Natural killer cell (primary cell): ENCODE measurements at regions of chr19 and their contacts with region 1.

Region 1: DNA sequence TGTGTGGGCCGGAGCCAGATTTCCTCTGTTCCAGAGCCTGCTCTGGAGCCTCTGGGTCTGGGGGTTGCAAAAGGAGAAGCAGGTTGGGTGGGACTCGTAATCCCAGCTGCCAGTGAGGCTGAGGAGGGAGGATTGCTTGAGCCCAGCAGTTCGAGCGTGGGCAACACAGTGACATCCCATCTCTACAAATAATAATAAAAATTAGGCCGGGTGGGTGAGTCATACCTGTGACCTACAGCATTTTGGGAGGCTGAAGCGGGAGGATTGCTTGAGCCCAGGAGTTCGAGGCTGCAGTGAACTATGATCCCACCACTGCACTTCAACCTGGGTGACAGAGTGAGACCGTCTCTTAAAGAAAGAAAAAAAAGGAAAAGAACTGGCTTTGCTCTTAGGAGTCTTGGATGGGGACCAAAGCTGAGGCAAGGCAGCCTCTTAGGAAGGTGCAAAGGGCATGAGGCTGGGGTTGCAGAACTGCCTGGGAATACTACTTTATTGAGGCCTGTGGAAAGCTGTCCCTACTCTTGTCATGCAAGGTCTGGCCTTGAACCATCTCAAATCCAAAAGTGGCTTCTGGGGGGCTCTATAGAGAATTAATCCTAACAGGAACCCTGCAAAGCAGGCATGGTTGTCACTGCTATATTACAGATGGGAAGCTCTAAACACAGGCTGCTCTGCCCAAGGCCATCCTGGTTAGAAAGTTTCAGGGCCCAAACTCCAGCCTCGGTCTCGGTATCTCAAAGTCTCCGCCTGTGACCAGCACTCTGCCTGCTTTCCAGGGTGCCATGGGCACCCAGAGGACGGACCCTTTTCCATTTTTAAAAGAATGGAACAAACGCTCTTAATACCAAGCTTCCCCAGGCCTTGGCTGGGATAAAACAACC is 880 bp upstream of the C19orf12 start:
- DNase-seq: no peak
- ATAC-seq: peak; percentile 2 to 17 (median 10)
- H3K4me3 ChIP-seq: peak overlapping the region; percentile 50
- H3K4me3 Mint-ChIP-seq: peak overlapping the region; percentile 95
- H3K27ac ChIP-seq: peak overlapping the region; percentile 81
- H3K27ac Mint-ChIP-seq: peak overlapping the region; percentile 75 to 88
- H3K4me1 ChIP-seq: peaks cover 53% of the 10 kb centered on the region
- H3K4me1 Mint-ChIP-seq: peaks cover 49 to 51% of the 10 kb centered on the region in 2 donors
- H3K27me3 ChIP-seq: no peaks in the 10 kb centered on the region
- H3K27me3 Mint-ChIP-seq: no peaks in the 10 kb centered on the region
- CTCF ChIP-seq: no peak

Region 2: DNA sequence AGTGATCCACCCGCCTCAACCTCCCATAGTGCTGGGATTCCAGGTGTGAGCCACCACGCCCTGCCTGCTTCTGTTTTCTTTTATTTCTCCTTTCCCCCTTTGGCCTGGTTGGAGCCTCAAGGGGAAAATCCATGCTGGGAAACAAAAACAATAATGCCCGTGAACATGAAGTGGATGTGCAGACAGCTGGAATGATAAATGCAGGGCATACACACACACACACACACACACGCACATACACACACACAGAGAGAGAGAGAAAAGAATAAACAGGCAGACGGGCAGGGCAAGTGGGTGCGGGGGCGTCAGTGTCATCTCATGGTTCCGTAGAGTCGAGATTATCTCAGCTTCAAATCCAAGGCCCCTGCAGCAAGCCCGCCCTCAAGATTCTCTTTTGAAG is 55.1 kb before region 1 on chr19:
- intact Hi-C with region 1: no loop called
- DNase-seq: peak in 1 of 2 donors; percentile 62
- ATAC-seq: no peak
- H3K4me3 ChIP-seq: no peak overlapping the region
- H3K4me3 Mint-ChIP-seq: no peak overlapping the region
- H3K27ac ChIP-seq: no peak overlapping the region
- H3K27ac Mint-ChIP-seq: no peak overlapping the region
- H3K4me1 ChIP-seq: peaks cover 11% of the 10 kb centered on the region
- H3K4me1 Mint-ChIP-seq: peaks cover 7 to 8% of the 10 kb centered on the region in 2 donors
- H3K27me3 ChIP-seq: no peaks in the 10 kb centered on the region
- H3K27me3 Mint-ChIP-seq: no peaks in the 10 kb centered on the region
- CTCF ChIP-seq: no peak

Region 3: DNA sequence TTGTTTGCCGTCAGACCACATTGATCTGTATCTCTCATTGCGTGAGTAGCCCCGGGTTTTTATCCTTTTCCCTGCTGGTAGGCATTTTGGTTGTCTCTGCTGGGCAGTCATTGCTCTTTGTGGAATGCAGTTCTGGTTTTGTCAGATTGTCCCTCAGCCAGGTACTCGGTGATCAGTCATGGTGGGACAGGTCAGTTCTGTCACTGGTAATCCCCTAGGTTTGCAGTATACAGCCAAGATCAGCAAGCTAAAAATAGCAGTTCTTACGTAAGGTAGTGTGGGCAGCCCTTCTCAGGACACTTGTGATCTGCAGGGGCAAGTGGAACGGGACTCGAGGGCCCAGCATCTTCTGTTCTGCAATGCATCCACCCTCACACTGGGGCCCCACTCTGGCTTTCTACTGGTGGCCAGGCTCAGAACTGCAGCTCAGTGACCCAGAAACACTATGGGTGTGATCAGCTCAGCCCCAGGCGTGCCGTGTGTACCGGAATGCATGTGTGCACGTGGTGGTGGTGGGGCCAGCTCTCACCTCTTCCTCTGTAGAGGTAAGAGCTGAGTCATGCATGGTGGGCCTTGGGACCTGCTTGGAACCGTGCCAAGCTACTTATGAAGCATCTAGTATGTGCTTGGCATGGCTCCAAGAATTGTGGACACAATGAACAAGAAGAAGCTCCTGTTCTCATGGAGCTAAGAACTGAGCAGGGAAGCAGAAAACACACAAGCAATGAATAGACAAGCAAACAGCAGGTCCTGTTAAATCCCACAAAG is 44.4 kb before region 1 on chr19:
- intact Hi-C with region 1: loop called (anchors 2 kb)
- DNase-seq: peak; percentile 81 to 93
- ATAC-seq: peak; percentile 71 to 86 (median 71)
- H3K4me3 ChIP-seq: peak overlapping the region; percentile 8
- H3K4me3 Mint-ChIP-seq: peak overlapping the region; percentile 91
- H3K27ac ChIP-seq: peak overlapping the region; percentile 96
- H3K27ac Mint-ChIP-seq: peak overlapping the region; percentile 94 to 98
- H3K4me1 ChIP-seq: peaks cover 100% of the 10 kb centered on the region
- H3K4me1 Mint-ChIP-seq: peaks cover 75 to 85% of the 10 kb centered on the region in 2 donors
- H3K27me3 ChIP-seq: no peaks in the 10 kb centered on the region
- H3K27me3 Mint-ChIP-seq: no peaks in the 10 kb centered on the region
- CTCF ChIP-seq: peak; percentile 77

Region 4: DNA sequence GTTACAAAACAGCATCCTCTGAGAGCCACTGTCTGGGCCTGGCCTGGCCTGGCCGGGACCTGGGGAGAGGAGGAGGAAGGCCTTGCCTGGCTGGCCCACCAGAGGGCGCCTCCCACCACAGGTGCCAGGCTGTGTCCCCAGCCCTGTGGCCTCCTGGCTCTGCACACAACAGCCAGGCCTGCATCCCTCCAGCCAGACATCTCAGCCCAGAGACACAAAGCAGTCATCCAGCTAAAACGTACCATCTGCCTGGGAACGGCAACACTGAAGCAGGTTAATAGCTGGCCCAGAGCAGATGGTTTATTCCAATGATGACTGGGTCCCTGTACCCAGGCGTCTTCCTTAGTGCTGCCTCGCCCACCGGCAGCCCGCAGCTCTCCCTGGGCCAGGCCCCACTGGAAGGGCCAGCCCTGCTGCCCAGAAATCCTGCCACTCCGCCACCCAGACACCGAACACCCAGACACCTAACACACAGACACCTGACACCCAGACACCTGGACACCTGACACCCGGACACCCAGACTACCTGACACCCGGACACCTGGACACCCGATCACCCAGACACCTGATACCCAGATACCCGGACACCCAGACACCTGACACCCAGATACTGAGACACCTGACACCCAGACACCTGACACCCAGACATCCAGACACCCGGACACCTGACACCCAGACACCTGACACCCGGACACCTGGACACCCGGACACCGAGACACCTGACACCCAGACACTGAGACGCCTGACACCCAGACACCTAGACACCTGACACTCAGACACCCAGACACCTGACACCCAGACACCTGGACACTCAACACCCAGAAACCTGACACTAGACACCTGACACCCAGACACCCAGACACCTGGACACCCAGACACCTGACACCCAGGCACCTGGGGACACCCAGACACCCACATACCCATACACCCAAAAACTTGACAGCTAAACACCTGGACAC is 21.0 kb before region 1 on chr19:
- intact Hi-C with region 1: loop called (anchors 1 kb)
- DNase-seq: peak; percentile 79 to 91
- ATAC-seq: peak; percentile 95 to 96 (median 95)
- H3K4me3 ChIP-seq: no peak overlapping the region
- H3K4me3 Mint-ChIP-seq: no peak overlapping the region
- H3K27ac ChIP-seq: no peak overlapping the region
- H3K27ac Mint-ChIP-seq: peak overlapping the region; percentile 76 to 87
- H3K4me1 ChIP-seq: peaks cover 23% of the 10 kb centered on the region
- H3K4me1 Mint-ChIP-seq: peaks cover 28 to 38% of the 10 kb centered on the region in 2 donors
- H3K27me3 ChIP-seq: no peaks in the 10 kb centered on the region
- H3K27me3 Mint-ChIP-seq: no peaks in the 10 kb centered on the region
- CTCF ChIP-seq: peak; percentile 86